ENCODE measurements at regions of chr5 and their contacts with region 1.

Region 1: GRCh38 chr5:91183737-91184136 is 199.4 kb downstream of the ARRDC3 start:
- DNase-seq: no peak
- ATAC-seq: no peak
- H3K4me3 Mint-ChIP-seq: no peak overlapping the region
- H3K27ac Mint-ChIP-seq: no peak overlapping the region
- H3K4me1 Mint-ChIP-seq: peaks cover 27% of the 10 kb centered on the region
- H3K27me3 Mint-ChIP-seq: peaks cover 5% of the 10 kb centered on the region
- CTCF ChIP-seq: no peak

Region 2: GRCh38 chr5:91162534-91163381 is 21.0 kb before region 1 on chr5:
- CTCF ChIA-PET with region 1: no interaction called
- POLR2A ChIA-PET with region 1: no interaction called
- intact Hi-C with region 1: loop called (anchors 2 kb)
- DNase-seq: no peak
- ATAC-seq: peak; percentile 96
- H3K4me3 Mint-ChIP-seq: no peak overlapping the region
- H3K27ac Mint-ChIP-seq: peak overlapping the region; percentile 54
- H3K4me1 Mint-ChIP-seq: peaks cover 16% of the 10 kb centered on the region
- H3K27me3 Mint-ChIP-seq: no peaks in the 10 kb centered on the region
- CTCF ChIP-seq: no peak

Measured in activated B cell treated with CpG ODN at 0.5 μM for 24 hours (primary cell).